ENCODE measurements at regions of chr10 and their contacts with region 1.

Region 1: GRCh38 chr10:27446091-27446918 is 57.8 kb upstream of the RAB18 start:
- DNase-seq: peak; percentile 31
- H3K4me3 ChIP-seq: no peak overlapping the region
- H3K27ac ChIP-seq: no peak overlapping the region
- H3K4me1 ChIP-seq: peaks cover 6% of the 10 kb centered on the region
- H3K27me3 ChIP-seq: no peaks in the 10 kb centered on the region
- CTCF ChIP-seq: peak; percentile 26 to 52

Region 2: GRCh38 chr10:27369880-27370279 is 76.4 kb before region 1 on chr10:
- CTCF ChIA-PET with region 1: no interaction called
- dilution Hi-C with region 1: no loop called
- in situ Hi-C with region 1: no loop called
- intact Hi-C with region 1: loop called (anchors 5 kb)
- DNase-seq: no peak
- H3K4me3 ChIP-seq: no peak overlapping the region
- H3K27ac ChIP-seq: no peak overlapping the region
- H3K4me1 ChIP-seq: no peaks in the 10 kb centered on the region
- H3K27me3 ChIP-seq: no peaks in the 10 kb centered on the region
- CTCF ChIP-seq: peak; percentile 23 to 36

Region 3: DNA sequence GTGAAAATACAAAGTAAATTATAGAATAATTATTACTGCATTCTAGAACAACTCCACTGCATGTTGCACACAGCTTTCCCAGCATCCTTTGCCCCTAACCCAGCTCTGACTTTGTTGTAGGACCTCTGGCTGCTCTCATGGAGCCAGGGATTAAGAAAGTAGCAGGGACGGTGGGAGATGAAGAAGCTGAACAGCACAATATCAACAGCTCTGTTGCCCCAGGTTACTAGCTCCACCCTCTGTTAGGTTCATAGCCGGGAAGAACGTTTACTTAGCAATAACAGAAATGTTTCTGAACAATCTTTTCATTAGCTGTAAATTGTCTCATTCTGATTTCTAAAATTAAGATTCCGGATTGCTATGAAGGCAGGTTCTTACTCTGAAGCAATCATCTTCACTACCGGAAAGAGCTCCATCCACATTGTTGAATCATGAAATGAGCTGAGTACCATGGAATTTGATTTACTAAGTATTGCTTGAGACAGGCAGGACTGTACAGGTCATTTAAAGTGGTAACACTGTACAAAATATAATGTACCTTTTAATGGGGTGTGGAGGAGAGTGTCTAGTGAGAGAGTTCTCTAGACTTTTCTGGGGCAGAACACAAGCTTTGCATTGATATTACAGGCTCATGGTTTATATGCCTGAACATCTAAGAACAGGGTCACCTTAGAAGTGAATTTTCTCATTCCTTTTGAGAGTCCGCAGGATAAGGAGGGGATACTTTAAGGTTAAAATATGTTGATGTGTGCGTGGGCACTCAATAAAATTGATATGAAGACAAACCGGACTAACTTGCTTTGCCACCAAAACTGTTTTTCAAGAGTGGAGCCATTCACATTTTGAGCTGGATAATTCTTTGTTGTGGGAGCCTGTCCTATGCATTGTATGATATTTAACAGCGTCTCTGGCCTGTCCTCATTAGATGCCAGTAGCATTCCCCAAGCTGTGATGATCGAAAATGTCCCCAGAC is 37.0 kb after region 1 on chr10:
- CTCF ChIA-PET with region 1: no interaction called
- dilution Hi-C with region 1: no loop called
- in situ Hi-C with region 1: no loop called
- intact Hi-C with region 1: loop called (anchors 1 kb)
- DNase-seq: peak; percentile 91
- H3K4me3 ChIP-seq: peak overlapping the region; percentile 16 to 36 (median 36)
- H3K27ac ChIP-seq: peak overlapping the region; percentile 98
- H3K4me1 ChIP-seq: peaks cover 43% of the 10 kb centered on the region
- H3K27me3 ChIP-seq: no peaks in the 10 kb centered on the region
- CTCF ChIP-seq: no peak

Region 4: GRCh38 chr10:27504007-27504807 is 57.9 kb after region 1 on chr10 and contains the start of gene RAB18:
- CTCF ChIA-PET with region 1: no interaction called
- dilution Hi-C with region 1: no loop called
- in situ Hi-C with region 1: loop called in 1 of 2 experiments (anchors 10 kb)
- intact Hi-C with region 1: loop called (anchors 1 kb)
- DNase-seq: peak; percentile 97
- H3K4me3 ChIP-seq: peak within 1 kb of the TSS; percentile 70 to 96 (median 94)
- H3K27ac ChIP-seq: peak within 1 kb of the TSS; percentile 92
- H3K4me1 ChIP-seq: peaks cover 28% of the 10 kb centered on the region
- H3K27me3 ChIP-seq: no peaks in the 10 kb centered on the region
- CTCF ChIP-seq: peak in 1 of 2 donors; percentile 13
- total RNA-seq, gene RAB18: 75.3 to 164 TPM

Region 5: GRCh38 chr10:27661514-27662286 is 215.4 kb after region 1 on chr10:
- CTCF ChIA-PET with region 1: no interaction called
- dilution Hi-C with region 1: no loop called
- in situ Hi-C with region 1: loop called in 1 of 2 experiments (anchors 25 kb)
- intact Hi-C with region 1: loop called (anchors 1 kb)
- DNase-seq: peak; percentile 4
- H3K4me3 ChIP-seq: no peak overlapping the region
- H3K27ac ChIP-seq: no peak overlapping the region
- H3K4me1 ChIP-seq: no peaks in the 10 kb centered on the region
- H3K27me3 ChIP-seq: no peaks in the 10 kb centered on the region
- CTCF ChIP-seq: no peak

Region 6: DNA sequence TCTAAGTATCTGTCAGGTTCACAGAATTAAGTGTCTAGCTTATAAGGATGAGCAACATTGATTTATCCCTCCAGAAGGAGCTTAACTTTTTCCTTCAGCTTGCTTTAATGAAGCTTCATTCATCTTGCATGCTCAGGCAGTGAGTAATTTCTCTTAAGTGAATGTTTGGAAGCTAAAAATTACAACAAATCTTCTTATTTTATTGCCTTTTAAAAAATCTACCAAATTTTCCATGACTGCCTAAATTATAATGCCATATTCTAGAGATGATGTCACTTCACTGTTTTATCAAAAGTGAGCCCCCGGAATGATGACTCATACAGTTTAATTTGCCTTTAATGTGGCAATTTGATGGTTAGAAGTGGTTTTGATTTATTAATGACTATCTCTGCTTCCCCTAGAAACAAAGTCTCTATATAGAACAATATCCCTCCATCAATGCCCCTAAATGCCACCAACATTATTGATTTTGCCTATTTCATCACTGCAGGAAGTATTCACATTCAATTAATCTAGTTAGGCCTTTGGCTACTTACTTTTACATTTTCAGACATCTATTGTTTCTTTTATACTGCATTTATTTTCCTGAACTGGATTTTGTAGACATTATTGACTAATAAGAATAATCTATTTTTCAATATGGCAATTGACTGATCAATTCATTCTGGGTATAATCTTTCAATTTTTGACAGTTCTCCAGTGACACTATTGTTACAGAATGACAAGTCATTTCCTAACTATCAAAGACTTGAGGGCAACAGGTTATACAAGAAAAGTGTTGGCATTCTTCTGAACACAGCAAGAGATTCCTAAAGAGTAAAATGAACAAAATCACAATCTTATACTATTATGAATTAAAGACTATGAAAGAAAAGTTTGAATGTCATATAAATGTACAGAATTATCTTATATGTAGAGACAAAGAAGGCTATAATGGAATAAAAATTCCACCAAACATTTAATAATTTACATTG is 691.9 kb after region 1 on chr10:
- CTCF ChIA-PET with region 1: no interaction called
- dilution Hi-C with region 1: no loop called
- in situ Hi-C with region 1: no loop called
- intact Hi-C with region 1: loop called (anchors 5 kb)
- DNase-seq: peak; percentile 1
- H3K4me3 ChIP-seq: no peak overlapping the region
- H3K27ac ChIP-seq: no peak overlapping the region
- H3K4me1 ChIP-seq: no peaks in the 10 kb centered on the region
- H3K27me3 ChIP-seq: no peaks in the 10 kb centered on the region
- CTCF ChIP-seq: no peak

Region 7: GRCh38 chr10:28241741-28242399 is 795.6 kb after region 1 on chr10:
- CTCF ChIA-PET with region 1: no interaction called
- dilution Hi-C with region 1: no loop called
- in situ Hi-C with region 1: no loop called
- intact Hi-C with region 1: loop called (anchors 5 kb)
- DNase-seq: peak; percentile 43
- H3K4me3 ChIP-seq: no peak overlapping the region
- H3K27ac ChIP-seq: no peak overlapping the region
- H3K4me1 ChIP-seq: peaks cover 9% of the 10 kb centered on the region
- H3K27me3 ChIP-seq: no peaks in the 10 kb centered on the region
- CTCF ChIP-seq: peak; percentile 88 to 89

Measured in mammary epithelial cell (primary cell).